ENCODE measurements at regions of chr10 and their contacts with region 1.

Region 1: GRCh38 chr10:52313933-52314816 is at the start of gene DKK1:
- DNase-seq: peak; percentile 100
- ATAC-seq: peak; percentile 55
- H3K4me3 ChIP-seq: peak within 1 kb of the TSS; percentile 76
- H3K27ac ChIP-seq: peak within 1 kb of the TSS; percentile 82
- H3K4me1 ChIP-seq: peaks cover 49% of the 10 kb centered on the region
- H3K27me3 ChIP-seq: no peaks in the 10 kb centered on the region
- CTCF ChIP-seq: peak; percentile 100
- total RNA-seq, gene DKK1: 1,187 and 1,592 TPM in 2 replicates

Region 2: GRCh38 chr10:52056296-52056695 is 257.9 kb before region 1 on chr10:
- CTCF ChIA-PET with region 1: no interaction called
- POLR2A ChIA-PET with region 1: no interaction called
- intact Hi-C with region 1: loop called (anchors 2 kb)
- DNase-seq: peak; percentile 98
- ATAC-seq: peak; percentile 82
- H3K4me3 ChIP-seq: no peak overlapping the region
- H3K27ac ChIP-seq: no peak overlapping the region
- H3K4me1 ChIP-seq: peaks cover 19% of the 10 kb centered on the region
- H3K27me3 ChIP-seq: no peaks in the 10 kb centered on the region
- CTCF ChIP-seq: no peak

Region 3: GRCh38 chr10:52239771-52240170 is 74.4 kb before region 1 on chr10:
- CTCF ChIA-PET with region 1: no interaction called
- POLR2A ChIA-PET with region 1: no interaction called
- intact Hi-C with region 1: no loop called
- DNase-seq: no peak
- ATAC-seq: no peak
- H3K4me3 ChIP-seq: no peak overlapping the region
- H3K27ac ChIP-seq: no peak overlapping the region
- H3K4me1 ChIP-seq: no peaks in the 10 kb centered on the region
- H3K27me3 ChIP-seq: no peaks in the 10 kb centered on the region
- CTCF ChIP-seq: no peak

Region 4: DNA sequence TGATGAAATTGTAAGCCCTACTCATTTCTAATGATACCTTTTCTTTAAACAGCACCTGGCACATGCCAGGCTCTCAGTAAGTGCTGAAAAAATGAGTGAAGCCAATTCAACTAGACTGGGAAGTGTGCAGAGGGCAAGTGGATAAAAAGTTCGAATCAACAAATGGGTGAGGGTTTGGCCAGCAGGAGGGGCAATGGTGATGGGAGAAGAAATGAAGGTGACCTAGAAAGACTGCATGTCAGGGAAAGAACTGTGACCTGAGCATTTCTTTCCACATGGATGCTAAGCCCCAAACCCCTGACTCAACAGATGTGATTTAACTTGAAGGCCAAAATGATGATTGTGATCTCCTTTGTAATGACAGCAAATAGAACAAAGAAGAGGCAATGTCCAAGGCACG is 54.6 kb after region 1 on chr10:
- CTCF ChIA-PET with region 1: interaction called, 3 read pairs
- POLR2A ChIA-PET with region 1: interaction called, 14 read pairs
- intact Hi-C with region 1: no loop called
- DNase-seq: no peak
- ATAC-seq: peak; percentile 33
- H3K4me3 ChIP-seq: no peak overlapping the region
- H3K27ac ChIP-seq: no peak overlapping the region
- H3K4me1 ChIP-seq: no peaks in the 10 kb centered on the region
- H3K27me3 ChIP-seq: no peaks in the 10 kb centered on the region
- CTCF ChIP-seq: peak; percentile 56

Region 5: DNA sequence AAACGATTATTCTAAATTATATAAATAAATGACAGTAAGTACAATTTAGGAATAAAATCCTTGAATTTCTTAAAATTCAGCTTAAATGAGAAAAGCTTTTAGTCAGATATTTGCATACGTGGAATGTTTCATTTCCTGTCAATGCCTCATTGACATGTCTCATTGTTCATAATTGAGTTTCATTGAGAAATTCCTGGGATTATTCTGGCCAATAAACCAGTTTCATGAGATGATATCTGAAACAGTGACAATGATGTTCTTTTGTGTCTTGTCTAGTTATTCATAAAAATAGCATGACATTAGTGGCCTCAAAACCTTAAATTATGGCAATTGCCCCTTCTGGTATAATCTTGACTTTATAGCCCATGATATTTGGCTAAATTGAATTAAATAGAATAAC is 95.8 kb after region 1 on chr10:
- CTCF ChIA-PET with region 1: interaction called, 4 read pairs
- POLR2A ChIA-PET with region 1: interaction called, 3 read pairs
- intact Hi-C with region 1: loop called (anchors 1 kb)
- DNase-seq: peak; percentile 67
- ATAC-seq: peak; percentile 25; the same call in 1 of the 2 replicates
- H3K4me3 ChIP-seq: no peak overlapping the region
- H3K27ac ChIP-seq: peak overlapping the region; percentile 31
- H3K4me1 ChIP-seq: peaks cover 20% of the 10 kb centered on the region
- H3K27me3 ChIP-seq: no peaks in the 10 kb centered on the region
- CTCF ChIP-seq: no peak

Region 6: DNA sequence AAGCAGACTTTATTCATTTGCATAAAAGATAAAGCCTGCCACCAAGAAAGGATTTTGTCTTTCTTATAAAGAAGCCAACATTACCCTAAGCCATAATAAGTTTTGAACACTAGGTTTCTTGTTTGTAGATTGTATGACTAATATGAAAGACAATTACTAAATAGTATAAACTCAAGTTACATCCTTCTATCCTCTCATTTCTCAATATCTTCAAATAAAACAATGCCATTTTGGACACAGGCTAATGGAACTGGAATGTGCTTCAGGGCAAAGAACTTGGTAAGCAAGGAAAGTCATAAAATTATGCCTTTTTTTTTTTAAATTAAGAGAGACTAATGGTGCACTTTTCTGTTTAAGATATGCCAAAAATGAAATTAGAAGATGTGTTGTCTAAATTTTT is 137.6 kb after region 1 on chr10:
- CTCF ChIA-PET with region 1: no interaction called
- POLR2A ChIA-PET with region 1: interaction called, 10 read pairs
- intact Hi-C with region 1: loop called (anchors 1 kb)
- DNase-seq: peak; percentile 100
- ATAC-seq: peak; percentile 65
- H3K4me3 ChIP-seq: peak overlapping the region; percentile 62
- H3K27ac ChIP-seq: peak overlapping the region; percentile 80
- H3K4me1 ChIP-seq: peaks cover 86% of the 10 kb centered on the region
- H3K27me3 ChIP-seq: no peaks in the 10 kb centered on the region
- CTCF ChIP-seq: no peak

Region 7: DNA sequence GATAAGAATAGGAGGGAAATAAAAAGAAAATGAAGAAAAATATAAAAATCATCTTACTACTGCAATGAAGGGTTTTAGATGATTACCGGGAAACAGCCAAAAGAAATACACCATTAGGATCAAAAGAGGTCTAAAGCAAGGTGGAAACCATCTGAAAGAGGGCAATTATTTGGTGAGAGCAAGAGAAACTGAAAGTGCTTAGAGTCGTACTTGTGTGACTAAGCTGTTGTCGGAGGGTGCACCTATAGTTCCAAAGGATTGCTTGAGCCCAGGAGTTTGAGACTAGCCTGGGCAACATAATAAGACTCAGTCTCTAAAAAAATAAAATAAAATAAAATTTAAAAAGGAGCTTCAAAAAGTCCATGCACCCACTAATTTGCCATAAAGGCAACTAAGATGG is 169.4 kb after region 1 on chr10:
- CTCF ChIA-PET with region 1: interaction called, 56 read pairs
- POLR2A ChIA-PET with region 1: interaction called, 27 read pairs
- intact Hi-C with region 1: no loop called
- DNase-seq: no peak
- ATAC-seq: no peak
- H3K4me3 ChIP-seq: no peak overlapping the region
- H3K27ac ChIP-seq: no peak overlapping the region
- H3K4me1 ChIP-seq: peaks cover 40% of the 10 kb centered on the region
- H3K27me3 ChIP-seq: no peaks in the 10 kb centered on the region
- CTCF ChIP-seq: no peak